ENCODE measurements at regions of chr19 and their contacts with region 1.

Region 1: GRCh38 chr19:38315657-38316476 is at the start of gene YIF1B:
- DNase-seq: peak; percentile 96 to 99 (median 98)
- ATAC-seq: peak; percentile 95 to 97 (median 96)
- H3K4me3 ChIP-seq: peak within 1 kb of the TSS; percentile 36 to 80 (median 68)
- H3K27ac ChIP-seq: peak within 1 kb of the TSS; percentile 49 to 94 (median 87)
- H3K4me1 ChIP-seq: peaks cover 0 to 69% (median 34%) of the 10 kb centered on the region in 12 donors
- H3K27me3 ChIP-seq: no peaks in the 10 kb centered on the region
- CTCF ChIP-seq: peak in 1 of 12 donors; percentile 17
- POLR2A ChIP-seq: peak in 1 of 2 donors; percentile 24
- total RNA-seq, gene YIF1B: 26.4 to 47.4 (median 31.9) TPM

Region 2: DNA sequence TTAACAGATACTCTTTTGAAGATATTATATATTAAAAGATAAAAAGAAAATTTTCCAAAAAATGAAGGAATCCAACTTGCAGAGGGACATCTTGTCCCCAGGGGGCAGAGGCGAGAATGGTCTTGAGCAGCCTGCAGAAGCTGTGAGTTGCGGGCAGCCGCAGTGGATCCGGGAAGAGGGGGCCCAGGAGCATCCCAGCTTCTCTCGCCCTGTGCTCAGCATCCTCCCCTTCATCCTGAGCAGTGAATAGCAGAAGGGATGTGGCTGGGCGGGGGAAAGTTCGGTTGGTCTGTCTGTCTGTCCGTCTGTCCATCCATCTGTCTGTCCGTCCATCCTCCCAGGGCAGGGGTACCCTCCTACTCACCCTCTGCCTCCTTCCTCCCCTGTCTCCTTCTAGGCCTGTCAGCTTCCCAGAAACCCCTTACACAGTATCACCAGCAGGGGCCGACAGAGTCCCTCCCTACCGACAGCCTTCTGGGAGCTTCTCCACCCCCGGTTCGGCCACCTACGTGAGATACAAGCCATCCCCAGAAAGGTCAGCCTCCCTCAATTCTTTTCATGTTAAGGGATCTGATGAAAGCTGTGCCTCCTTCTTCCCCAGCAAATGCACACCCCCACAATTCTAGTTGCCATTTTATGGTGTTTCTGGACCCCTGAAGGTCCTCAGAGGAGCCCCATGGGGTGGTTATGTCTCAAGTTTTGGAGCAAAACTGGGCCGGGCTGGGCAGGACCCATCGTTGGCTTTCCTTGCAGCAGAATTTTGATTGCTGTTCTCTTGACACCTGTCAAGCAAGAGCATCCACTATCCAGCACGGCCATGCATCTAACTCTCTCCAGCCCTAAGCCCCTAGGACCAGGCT is 173.5 kb before region 1 on chr19:
- intact Hi-C with region 1: loop called in 1 of 10 experiments (anchors 10 kb)
- DNase-seq: peak; percentile 49 to 77 (median 63)
- ATAC-seq: peak; percentile 70 to 86 (median 74)
- H3K4me3 ChIP-seq: no peak overlapping the region
- H3K27ac ChIP-seq: no peak overlapping the region
- H3K4me1 ChIP-seq: no peaks in the 10 kb centered on the region
- H3K27me3 ChIP-seq: no peaks in the 10 kb centered on the region
- CTCF ChIP-seq: peak; percentile 48 to 75 (median 68)
- POLR2A ChIP-seq: no peak

Region 3: GRCh38 chr19:38255383-38256014 is 60.4 kb before region 1 on chr19:
- intact Hi-C with region 1: loop called in 2 of 10 experiments (anchors 5 kb)
- DNase-seq: peak in 1 of 5 donors; percentile 35
- ATAC-seq: no peak
- H3K4me3 ChIP-seq: peak overlapping the region; percentile 52 to 91 (median 68)
- H3K27ac ChIP-seq: peak overlapping the region; percentile 55 to 100 (median 94)
- H3K4me1 ChIP-seq: peaks cover 0 to 60% (median 28%) of the 10 kb centered on the region in 12 donors
- H3K27me3 ChIP-seq: peaks cover 0 to 16% (median 0%) of the 10 kb centered on the region in 9 donors
- CTCF ChIP-seq: no peak
- POLR2A ChIP-seq: no peak

Region 4: DNA sequence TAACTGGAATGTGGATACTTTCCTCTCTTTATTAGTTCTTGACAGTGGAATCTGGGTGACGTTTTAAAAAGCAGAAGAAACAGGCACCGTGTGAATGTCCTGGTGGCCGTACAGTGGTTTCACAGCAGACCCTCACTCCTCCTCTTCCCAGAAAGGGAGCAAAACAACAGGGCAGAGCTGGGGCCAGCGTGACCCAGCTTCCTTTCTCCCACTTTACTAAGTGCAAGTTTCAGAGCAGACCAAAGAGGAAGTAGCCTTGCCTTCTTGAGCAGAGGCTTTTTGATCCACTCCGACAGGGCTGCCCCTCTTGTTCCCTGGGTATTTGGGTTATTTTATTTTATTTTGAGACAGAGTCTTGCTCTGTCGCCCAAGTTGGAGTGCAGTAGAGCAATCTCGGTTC is 31.4 kb before region 1 on chr19:
- intact Hi-C with region 1: loop called in 7 of 10 experiments (anchors 2 to 5 kb)
- DNase-seq: peak in 1 of 5 donors; percentile 46
- ATAC-seq: peak in 3 of 4 donors; percentile 32 to 60 (median 53)
- H3K4me3 ChIP-seq: no peak overlapping the region
- H3K27ac ChIP-seq: peak overlapping the region in 2 of 12 donors; percentile 38 to 86
- H3K4me1 ChIP-seq: peaks cover 0 to 48% (median 20%) of the 10 kb centered on the region in 12 donors
- H3K27me3 ChIP-seq: no peaks in the 10 kb centered on the region
- CTCF ChIP-seq: no peak
- POLR2A ChIP-seq: no peak